CD8-positive, alpha-beta T cell (primary cell): ENCODE measurements at regions of chr10 and their contacts with region 1.

Region 1: DNA sequence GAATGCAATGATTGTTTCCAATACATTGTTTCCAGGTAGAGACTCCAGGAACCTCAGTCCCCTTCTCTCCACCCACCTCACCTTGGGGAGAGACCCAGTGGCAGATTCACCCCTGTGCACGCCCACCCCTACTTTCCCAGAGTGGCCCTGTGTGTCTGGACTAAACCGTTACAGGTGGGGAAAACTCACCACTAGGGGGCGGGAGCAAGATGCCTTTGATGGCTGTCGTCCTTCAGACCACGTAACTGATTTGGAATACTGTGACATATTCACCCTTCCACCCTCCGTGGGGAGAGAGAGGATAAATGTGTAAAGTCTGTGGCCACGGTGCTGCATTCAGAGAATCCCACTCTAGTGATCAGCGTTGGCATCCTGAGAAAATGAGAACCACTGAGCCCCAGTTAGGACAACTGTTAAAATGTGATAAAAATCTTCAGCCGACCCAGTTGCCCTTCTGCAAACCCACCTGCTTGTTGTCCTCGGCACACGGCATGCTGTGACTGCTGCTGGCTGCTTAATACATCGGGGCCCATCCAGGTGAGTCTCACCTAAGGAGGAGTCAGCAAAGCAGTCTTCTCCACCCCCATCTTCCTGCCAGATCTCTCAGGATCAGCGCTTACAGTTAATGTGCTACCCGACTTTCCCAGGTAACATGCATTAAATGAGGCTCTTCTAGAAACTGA is 41.5 kb upstream of the NMT2 start:
- DNase-seq: peak; percentile 58 to 90 (median 84)
- ATAC-seq: peak; percentile 61
- H3K4me3 ChIP-seq: no peak overlapping the region
- H3K4me3 Mint-ChIP-seq: peak overlapping the region; percentile 70
- H3K27ac ChIP-seq: no peak overlapping the region
- H3K27ac Mint-ChIP-seq: peak overlapping the region; percentile 73
- H3K4me1 ChIP-seq: peaks cover 30% of the 10 kb centered on the region
- H3K4me1 Mint-ChIP-seq: peaks cover 60% of the 10 kb centered on the region
- H3K27me3 ChIP-seq: no peaks in the 10 kb centered on the region
- H3K27me3 Mint-ChIP-seq: no peaks in the 10 kb centered on the region
- CTCF ChIP-seq: peak; percentile 90

Region 2: GRCh38 chr10:14982744-14983143 is 227.2 kb before region 1 on chr10:
- CTCF ChIA-PET with region 1: no interaction called
- POLR2A ChIA-PET with region 1: no interaction called
- intact Hi-C with region 1: no loop called
- DNase-seq: no peak
- ATAC-seq: no peak
- H3K4me3 ChIP-seq: no peak overlapping the region
- H3K4me3 Mint-ChIP-seq: no peak overlapping the region
- H3K27ac ChIP-seq: no peak overlapping the region
- H3K27ac Mint-ChIP-seq: no peak overlapping the region
- H3K4me1 ChIP-seq: no peaks in the 10 kb centered on the region
- H3K4me1 Mint-ChIP-seq: no peaks in the 10 kb centered on the region
- H3K27me3 ChIP-seq: no peaks in the 10 kb centered on the region
- H3K27me3 Mint-ChIP-seq: peaks cover 6% of the 10 kb centered on the region
- CTCF ChIP-seq: no peak

Region 3: DNA sequence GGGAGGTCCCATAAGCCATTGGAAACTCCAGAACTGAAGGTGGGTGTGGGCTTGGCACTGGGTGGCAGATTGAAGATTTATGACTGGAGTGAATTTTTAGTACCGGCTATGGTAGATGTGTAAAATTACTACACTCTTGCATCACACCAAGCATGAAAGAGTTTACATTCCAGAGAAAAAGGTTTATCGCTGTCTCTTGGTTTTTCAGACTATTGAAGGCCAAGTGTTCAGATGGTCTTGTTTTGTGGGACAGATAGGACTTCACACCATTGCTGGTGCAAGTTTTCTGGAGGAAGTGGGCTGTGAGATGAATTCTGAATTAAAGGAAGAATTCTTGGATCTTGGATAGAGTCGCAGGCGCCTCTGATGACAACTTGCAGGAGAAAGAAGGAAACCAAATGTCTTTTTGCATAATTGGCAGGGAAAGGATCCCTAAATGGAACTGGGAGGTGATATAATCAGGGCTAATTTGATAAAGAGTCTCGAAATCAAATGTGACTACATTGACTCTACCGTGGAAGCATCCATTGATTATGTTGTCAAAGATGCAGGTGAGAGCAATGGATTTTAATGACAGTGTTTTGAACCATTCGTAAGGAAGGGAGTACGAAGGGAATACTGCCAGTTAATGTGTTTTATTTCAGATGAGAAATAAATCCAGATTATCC is 27.3 kb before region 1 on chr10:
- CTCF ChIA-PET with region 1: interaction called, 7 read pairs
- POLR2A ChIA-PET with region 1: interaction called, 3 read pairs
- intact Hi-C with region 1: loop called in 1 of 2 experiments (anchors 2 kb)
- DNase-seq: no peak
- ATAC-seq: no peak
- H3K4me3 ChIP-seq: no peak overlapping the region
- H3K4me3 Mint-ChIP-seq: no peak overlapping the region
- H3K27ac ChIP-seq: no peak overlapping the region
- H3K27ac Mint-ChIP-seq: no peak overlapping the region
- H3K4me1 ChIP-seq: peaks cover 22% of the 10 kb centered on the region
- H3K4me1 Mint-ChIP-seq: peaks cover 31% of the 10 kb centered on the region
- H3K27me3 ChIP-seq: no peaks in the 10 kb centered on the region
- H3K27me3 Mint-ChIP-seq: no peaks in the 10 kb centered on the region
- CTCF ChIP-seq: no peak

Region 4: DNA sequence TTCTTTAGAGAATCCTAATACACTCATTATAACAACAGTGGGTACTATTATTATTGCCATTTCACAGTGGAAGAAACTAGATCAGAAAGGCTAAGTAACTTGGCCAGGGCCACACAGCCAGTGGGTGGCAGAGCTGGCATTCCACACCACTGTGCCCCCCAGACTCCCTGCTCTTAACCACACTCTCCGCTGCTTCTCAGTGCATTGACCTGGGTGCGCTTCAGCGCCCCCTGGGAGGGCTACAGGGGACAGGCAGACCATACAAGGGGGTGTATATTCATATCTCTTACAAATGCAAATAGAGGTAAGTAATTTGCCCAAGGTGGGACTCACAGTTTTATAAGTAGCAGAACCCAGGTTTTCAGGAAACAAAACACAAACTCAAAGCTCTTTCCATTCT is 35.6 kb after region 1 on chr10:
- CTCF ChIA-PET with region 1: interaction called, 9 read pairs
- POLR2A ChIA-PET with region 1: interaction called, 5 read pairs
- intact Hi-C with region 1: loop called in 1 of 2 experiments (anchors 1 kb)
- DNase-seq: peak in 6 of 9 experiments; percentile 23 to 59 (median 51)
- ATAC-seq: peak; percentile 73
- H3K4me3 ChIP-seq: no peak overlapping the region
- H3K4me3 Mint-ChIP-seq: no peak overlapping the region
- H3K27ac ChIP-seq: no peak overlapping the region
- H3K27ac Mint-ChIP-seq: no peak overlapping the region
- H3K4me1 ChIP-seq: no peaks in the 10 kb centered on the region
- H3K4me1 Mint-ChIP-seq: peaks cover 14% of the 10 kb centered on the region
- H3K27me3 ChIP-seq: no peaks in the 10 kb centered on the region
- H3K27me3 Mint-ChIP-seq: no peaks in the 10 kb centered on the region
- CTCF ChIP-seq: peak; percentile 37

Region 5: GRCh38 chr10:15719899-15720634 is 510.1 kb after region 1 on chr10 and contains the start of gene ITGA8:
- CTCF ChIA-PET with region 1: no interaction called
- POLR2A ChIA-PET with region 1: no interaction called
- intact Hi-C with region 1: no loop called
- DNase-seq: no peak
- ATAC-seq: no peak
- H3K4me3 ChIP-seq: no peak within 1 kb of the TSS
- H3K4me3 Mint-ChIP-seq: no peak within 1 kb of the TSS
- H3K27ac ChIP-seq: no peak within 1 kb of the TSS
- H3K27ac Mint-ChIP-seq: no peak within 1 kb of the TSS
- H3K4me1 ChIP-seq: no peaks in the 10 kb centered on the region
- H3K4me1 Mint-ChIP-seq: peaks cover 4% of the 10 kb centered on the region
- H3K27me3 ChIP-seq: peaks cover 0 to 5% of the 10 kb centered on the region in 2 experiments
- H3K27me3 Mint-ChIP-seq: peaks cover 38% of the 10 kb centered on the region
- CTCF ChIP-seq: no peak
- total RNA-seq, gene ITGA8: not detected